Activated CD4-positive, alpha-beta memory T cell treated with anti-CD3 and anti-CD28 coated beads for 36 hours (primary cell): ENCODE measurements at regions of chr17 and their contacts with region 1.

Region 1: DNA sequence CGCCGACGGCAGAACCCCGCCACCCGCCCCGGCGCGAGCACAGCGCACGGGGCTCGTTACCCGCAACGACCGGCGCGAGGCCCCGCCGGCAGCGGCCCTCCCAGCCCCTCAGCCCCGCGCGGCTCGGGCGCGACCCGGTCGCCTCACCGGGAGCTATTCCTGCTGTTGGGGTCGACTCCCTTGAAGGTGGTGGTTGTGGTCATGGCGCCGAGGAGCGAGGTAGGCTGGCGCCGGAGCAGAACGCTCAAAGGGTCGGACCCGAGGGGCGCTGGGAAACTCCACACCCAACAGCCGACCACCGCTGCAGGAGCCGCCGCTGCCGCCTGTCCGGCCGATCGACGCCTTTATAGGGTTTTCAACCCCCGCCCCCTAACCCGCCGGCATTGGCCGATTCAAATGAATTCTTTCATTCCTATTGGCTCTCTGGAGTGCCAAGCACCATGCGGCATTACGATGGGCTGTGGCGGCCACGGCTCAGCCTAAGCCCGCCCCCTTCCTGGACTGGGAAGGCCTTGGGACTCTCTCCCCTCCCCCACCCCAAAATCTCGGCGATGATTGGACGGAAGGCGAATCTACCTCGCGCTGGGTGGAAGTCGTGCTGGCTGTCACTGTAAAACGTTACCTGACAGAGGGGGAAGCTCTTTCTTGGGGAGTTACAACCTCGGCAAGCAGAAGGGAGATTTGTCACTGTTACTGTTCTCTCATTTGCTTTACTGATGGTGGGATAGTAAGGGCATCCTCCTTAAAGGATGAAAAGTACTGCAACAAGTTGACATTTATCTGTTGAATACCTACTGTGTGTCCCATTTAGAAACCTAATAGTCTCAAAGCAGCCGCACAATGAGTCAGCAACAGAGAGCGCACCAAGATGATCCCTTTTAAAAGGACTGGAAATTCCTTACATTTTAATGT is at the start of gene JPT1:
- DNase-seq: peak; percentile 99
- H3K4me3 Mint-ChIP-seq: peak within 1 kb of the TSS; percentile 95
- H3K27ac Mint-ChIP-seq: peak within 1 kb of the TSS; percentile 86
- H3K4me1 Mint-ChIP-seq: peaks cover 34% of the 10 kb centered on the region
- H3K27me3 Mint-ChIP-seq: no peaks in the 10 kb centered on the region
- total RNA-seq, gene JPT1: 263 to 267 TPM

Region 2: DNA sequence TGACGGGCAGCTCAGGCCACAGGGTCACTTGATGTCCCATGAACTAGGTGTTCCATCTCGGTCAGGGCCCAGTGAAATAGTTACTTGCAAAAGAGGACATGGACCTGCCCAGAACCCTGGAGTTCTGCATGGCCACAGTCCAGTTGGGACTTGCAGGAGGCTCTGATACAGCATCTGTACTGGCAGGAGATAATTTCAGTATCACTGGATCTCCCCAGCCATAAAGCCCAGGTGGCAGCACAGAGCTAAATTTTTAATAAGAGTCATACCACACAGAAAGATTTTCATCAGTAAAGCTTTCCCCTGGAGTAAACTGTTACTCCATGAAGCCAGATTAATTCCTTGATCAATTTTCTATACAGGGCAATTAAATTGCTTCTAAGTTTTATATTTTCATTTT is 84.7 kb before region 1 on chr17:
- CTCF ChIA-PET with region 1: no interaction called
- POLR2A ChIA-PET with region 1: no interaction called
- intact Hi-C with region 1: loop called (anchors 5 kb)
- DNase-seq: no peak
- H3K4me3 Mint-ChIP-seq: no peak overlapping the region
- H3K27ac Mint-ChIP-seq: no peak overlapping the region
- H3K4me1 Mint-ChIP-seq: peaks cover 32% of the 10 kb centered on the region
- H3K27me3 Mint-ChIP-seq: no peaks in the 10 kb centered on the region